Panc1 (cell line): ENCODE measurements at regions of chr15 and their contacts with region 1.

Region 1: DNA sequence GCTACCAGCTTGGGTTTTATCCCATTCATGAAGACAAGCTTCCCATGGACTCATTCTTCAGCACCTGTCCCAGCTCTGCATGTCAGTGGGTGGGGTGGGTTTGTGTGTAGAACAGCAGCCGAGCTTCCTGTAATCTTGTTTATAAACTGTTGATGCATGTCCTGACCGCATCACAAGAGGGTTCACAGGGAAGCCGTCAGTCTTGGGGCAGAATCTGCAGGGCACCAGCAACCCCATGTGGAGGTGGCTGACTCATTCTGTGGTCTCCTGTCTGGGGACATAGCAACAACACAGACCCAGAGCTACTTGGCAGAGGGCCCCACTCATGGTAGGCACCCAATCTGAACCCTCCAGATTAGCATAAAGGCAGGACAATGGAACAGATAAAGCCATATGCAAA is 35.6 kb downstream of the DAPK2 start:
- DNase-seq: no peak
- ATAC-seq: no peak
- H3K4me3 ChIP-seq: no peak overlapping the region
- H3K27ac ChIP-seq: no peak overlapping the region
- H3K4me1 ChIP-seq: peaks cover 4% of the 10 kb centered on the region; the same call in 1 of the 2 replicates
- H3K27me3 ChIP-seq: no peaks in the 10 kb centered on the region
- CTCF ChIP-seq: no peak

Region 2: DNA sequence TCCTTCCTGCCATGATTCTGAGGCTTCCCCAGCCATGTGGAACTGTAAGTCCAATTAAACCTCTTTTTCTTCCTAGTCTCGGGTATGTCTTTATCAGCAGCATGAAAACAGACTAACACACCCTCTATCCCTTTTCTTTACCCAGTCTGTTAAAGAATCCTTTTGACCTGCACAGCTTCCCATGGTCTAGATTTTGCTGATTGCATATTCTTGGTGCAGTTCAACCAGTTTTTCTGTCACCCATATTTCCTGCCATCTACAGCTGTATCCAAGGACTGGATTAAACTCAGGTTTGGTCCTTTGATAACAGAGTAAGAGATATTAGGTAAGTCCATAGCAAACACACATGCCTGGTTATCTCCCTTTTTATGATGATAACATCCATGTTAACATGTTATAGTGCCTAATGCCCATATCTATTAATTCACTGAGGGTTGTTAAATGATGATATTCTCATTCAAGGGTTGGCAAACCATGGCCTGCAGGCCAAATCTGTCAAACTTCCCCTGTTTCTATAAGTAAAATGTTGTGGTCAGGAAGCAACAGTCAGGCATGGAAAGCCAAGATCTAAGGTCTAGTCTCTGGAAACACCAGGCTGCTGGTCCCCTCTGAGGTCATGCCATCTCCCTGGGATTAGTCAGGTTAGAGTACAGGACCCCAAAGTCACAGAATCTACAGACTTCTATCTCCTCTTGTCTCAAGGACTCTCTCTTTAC is 162.1 kb before region 1 on chr15:
- CTCF ChIA-PET with region 1: no interaction called
- POLR2A ChIA-PET with region 1: interaction called, 13 read pairs
- in situ Hi-C with region 1: no loop called
- intact Hi-C with region 1: no loop called
- DNase-seq: no peak
- ATAC-seq: no peak
- H3K4me3 ChIP-seq: no peak overlapping the region
- H3K27ac ChIP-seq: no peak overlapping the region
- H3K4me1 ChIP-seq: no peaks in the 10 kb centered on the region
- H3K27me3 ChIP-seq: no peaks in the 10 kb centered on the region
- CTCF ChIP-seq: no peak

Region 3: DNA sequence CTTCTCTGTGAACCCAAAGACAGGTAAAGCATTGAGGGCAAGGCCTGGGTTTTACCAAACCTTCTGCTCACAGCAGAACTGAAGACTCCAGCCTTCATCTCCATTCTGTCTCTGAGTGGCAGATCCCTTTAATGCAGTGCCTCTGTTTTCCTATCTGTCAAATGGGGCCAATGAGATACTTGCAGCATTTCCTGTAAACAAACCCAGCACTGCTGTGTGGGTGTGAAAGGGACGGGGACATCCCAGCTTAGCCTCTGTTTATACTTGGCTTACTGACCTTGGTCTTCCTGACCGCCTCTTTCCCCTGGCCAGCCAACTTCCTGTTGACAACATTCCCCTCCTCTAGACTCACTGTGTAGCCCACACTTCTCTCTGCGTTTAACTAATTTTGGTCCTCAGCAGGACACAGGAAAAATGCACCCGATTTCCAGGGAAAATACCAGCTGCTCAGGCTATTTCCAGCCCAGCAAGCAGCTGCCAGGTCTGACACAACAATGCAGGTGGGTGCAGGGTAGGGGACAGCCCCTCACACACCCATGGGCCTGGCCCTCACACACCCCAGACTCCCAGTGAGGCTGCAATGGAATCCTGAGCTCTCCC is 71.1 kb before region 1 on chr15:
- CTCF ChIA-PET with region 1: no interaction called
- POLR2A ChIA-PET with region 1: no interaction called
- in situ Hi-C with region 1: no loop called
- intact Hi-C with region 1: no loop called
- DNase-seq: no peak
- ATAC-seq: no peak
- H3K4me3 ChIP-seq: no peak overlapping the region
- H3K27ac ChIP-seq: no peak overlapping the region
- H3K4me1 ChIP-seq: no peaks in the 10 kb centered on the region
- H3K27me3 ChIP-seq: no peaks in the 10 kb centered on the region
- CTCF ChIP-seq: no peak